Activated CD4-positive, alpha-beta T cell treated with anti-CD3 and anti-CD28 coated beads, Interleukin-2, amount 10 ng/mL, durations not matched to agents 24 days and 14 days (primary cell): ENCODE measurements at regions of chr15 and their contacts with region 1.

Region 1: DNA sequence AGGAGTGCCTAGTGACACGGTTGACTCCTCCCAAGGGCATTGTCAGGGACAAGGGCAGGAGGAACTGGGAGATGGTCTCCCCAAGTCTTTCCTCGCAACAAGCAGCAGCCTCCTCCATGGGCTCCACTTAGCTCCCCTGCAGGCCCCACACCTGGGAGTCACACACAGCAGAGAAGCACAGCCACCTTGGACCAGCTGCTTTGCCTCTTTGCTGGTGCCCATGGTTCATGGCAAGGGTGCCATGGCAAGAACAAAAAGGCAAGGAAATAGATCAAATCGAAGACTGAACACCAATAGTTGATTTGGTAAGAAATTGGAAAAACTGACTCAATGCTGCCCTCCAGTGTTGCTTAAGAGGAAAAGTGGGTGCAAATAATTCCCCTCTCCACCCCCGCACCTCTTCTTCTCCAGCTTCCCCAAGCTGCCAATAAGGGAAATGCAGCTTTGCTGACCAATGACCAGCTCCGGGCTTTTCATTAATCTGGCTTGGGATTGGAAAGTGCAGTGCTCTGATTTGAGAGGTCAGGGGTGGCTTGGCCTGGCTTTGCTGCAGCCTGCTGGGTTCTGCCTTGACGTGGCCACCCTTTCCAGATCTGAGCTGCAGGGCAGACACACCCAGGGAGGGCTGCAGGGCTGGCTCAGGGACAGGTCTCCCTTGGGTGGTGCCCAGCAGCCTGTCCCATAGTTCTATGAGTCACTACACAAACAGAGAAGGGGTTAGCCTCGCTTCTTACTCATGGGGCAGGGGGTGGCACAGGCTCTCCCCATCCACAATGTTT is 162.0 kb downstream of the KLF13 start:
- DNase-seq: peak; percentile 82
- H3K4me3 Mint-ChIP-seq: peak overlapping the region; percentile 41
- H3K27ac Mint-ChIP-seq: peak overlapping the region; percentile 84
- H3K4me1 Mint-ChIP-seq: peaks cover 67% of the 10 kb centered on the region
- H3K27me3 Mint-ChIP-seq: no peaks in the 10 kb centered on the region

Region 2: DNA sequence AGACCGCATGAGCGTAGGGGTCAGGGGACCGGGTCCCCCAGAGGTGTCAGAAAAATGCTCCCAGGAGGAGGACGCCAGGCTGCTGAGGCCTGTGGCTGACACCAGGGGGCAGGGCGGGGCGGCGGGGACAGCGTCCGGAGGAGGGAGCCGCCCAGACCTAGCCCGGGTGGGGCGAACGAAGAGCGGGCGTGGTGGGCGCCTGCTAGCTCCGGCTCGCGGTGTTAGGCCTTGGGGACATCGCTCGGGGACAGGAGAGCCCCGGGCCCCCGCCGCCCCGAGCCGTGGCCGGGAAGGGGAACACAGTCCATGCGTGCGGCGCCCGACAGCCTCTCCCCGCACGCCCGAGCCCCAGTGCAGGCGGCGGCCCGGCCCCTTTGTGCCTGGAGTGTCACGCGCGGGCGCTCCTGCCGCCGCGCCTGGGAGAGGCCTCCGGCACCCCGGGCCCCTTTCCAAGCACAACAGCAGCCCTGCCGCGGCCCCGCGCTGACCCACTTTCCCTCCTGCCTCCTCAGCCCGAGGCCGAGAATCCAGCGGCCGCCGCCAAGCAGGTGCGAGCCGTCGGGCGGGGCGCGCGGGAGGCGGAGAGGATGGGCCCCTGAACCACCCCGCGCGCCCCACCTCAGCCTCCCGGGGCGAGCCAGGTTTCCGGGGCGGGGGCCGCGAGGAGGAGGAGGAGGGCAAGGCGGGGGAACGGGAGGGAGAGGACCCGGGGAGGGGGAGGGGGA is 273.0 kb before region 1 on chr15:
- intact Hi-C with region 1: loop called (anchors 1 kb)
- DNase-seq: peak; percentile 94
- H3K4me3 Mint-ChIP-seq: peak overlapping the region; percentile 87
- H3K27ac Mint-ChIP-seq: peak overlapping the region; percentile 71
- H3K4me1 Mint-ChIP-seq: peaks cover 36% of the 10 kb centered on the region
- H3K27me3 Mint-ChIP-seq: no peaks in the 10 kb centered on the region

Region 3: GRCh38 chr15:31344823-31345605 is 143.6 kb before region 1 on chr15:
- intact Hi-C with region 1: loop called (anchors 5 kb)
- DNase-seq: peak; percentile 76
- H3K4me3 Mint-ChIP-seq: peak overlapping the region; percentile 95
- H3K27ac Mint-ChIP-seq: peak overlapping the region; percentile 99
- H3K4me1 Mint-ChIP-seq: peaks cover 91% of the 10 kb centered on the region
- H3K27me3 Mint-ChIP-seq: no peaks in the 10 kb centered on the region

Region 4: DNA sequence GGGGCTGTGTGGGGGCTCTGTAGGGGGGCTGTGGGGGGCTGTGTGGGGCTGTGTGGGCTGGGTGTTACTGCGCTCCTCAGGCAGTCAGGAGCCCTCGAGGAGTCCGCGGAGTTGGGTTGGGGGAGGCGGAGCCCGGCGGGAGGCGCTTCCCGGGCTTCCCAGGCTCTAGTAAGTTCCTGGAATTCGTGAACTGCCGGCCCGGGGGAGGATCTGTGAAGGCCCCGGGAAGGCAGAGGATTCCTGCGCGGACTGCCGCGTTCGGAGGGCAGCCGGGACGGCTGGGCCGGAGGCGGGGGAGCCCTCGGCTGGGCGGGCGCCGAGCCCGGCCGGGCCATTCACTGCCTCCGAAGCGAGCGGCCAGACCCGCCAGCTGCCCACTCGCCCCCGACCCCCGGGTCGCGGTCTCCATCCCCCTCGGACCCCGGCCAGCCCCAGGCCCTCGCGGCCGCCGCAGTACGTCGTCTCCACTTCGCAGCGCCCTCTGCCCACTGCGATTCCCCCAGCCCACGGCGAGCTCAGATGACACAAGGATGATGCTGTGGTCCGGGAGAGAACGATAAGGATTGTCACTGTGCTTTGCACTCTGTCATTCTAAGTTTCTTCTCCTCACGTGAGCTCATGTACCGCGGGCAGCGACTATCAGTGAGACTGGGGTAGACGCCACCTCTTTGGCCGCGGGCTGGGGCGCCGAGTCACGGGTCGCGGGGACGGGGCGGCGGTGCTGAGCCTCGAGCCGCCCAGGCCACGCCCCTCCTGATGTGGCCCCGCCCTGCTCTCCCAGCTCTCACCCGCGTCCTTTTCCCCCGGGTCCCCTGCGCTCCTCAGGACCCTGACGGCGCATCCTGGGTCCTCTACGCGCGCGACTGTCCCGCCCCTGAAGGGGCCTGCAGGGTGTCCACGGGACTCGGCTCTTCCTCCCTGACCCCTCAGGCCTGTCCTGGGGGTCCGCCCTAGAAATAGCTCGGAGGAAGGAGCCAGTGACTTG is 96.6 kb before region 1 on chr15:
- intact Hi-C with region 1: loop called (anchors 2 kb)
- DNase-seq: peak; percentile 96
- H3K4me3 Mint-ChIP-seq: peak overlapping the region; percentile 87
- H3K27ac Mint-ChIP-seq: peak overlapping the region; percentile 92
- H3K4me1 Mint-ChIP-seq: peaks cover 38% of the 10 kb centered on the region
- H3K27me3 Mint-ChIP-seq: no peaks in the 10 kb centered on the region